Activated CD4-positive, alpha-beta T cell treated with anti-CD3 and anti-CD28 coated beads for 36 hours (primary cell): ENCODE measurements at regions of chr16 and their contacts with region 1.

Region 1: GRCh38 chr16:88785106-88785924 is at the start of gene PIEZO1:
- DNase-seq: peak; percentile 85
- ATAC-seq: peak; percentile 5
- H3K4me3 Mint-ChIP-seq: peak within 1 kb of the TSS; percentile 66
- H3K27ac Mint-ChIP-seq: peak within 1 kb of the TSS; percentile 78
- H3K4me1 Mint-ChIP-seq: peaks cover 44% of the 10 kb centered on the region
- H3K27me3 Mint-ChIP-seq: no peaks in the 10 kb centered on the region
- total RNA-seq, gene PIEZO1: 105 to 126 TPM

Region 2: DNA sequence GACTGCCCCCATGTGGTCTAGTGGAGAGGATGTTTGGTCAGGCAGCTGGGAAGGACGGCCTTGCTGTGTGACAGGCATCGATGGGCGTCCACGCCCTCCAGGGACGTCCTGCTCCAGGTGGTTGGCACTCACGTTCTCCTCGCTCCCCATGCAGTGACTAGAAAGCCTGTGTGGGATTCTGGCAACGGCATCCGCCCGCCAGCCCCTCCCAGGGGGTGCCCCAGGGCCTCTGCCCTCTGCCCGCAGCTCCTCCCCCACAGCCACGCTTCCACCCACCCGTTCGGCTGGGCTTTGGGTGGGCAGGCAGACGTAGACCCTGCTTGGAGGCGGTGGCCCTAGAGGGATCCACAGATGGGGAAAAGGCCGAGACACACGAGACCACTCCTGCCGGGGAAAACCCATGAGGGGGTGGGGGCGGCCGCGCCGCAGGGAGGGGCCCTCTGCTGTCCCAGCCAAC is 151.6 kb before region 1 on chr16:
- CTCF ChIA-PET with region 1: no interaction called
- POLR2A ChIA-PET with region 1: no interaction called
- intact Hi-C with region 1: loop called in 1 of 2 experiments (anchors 10 kb)
- DNase-seq: peak; percentile 81
- ATAC-seq: peak; percentile 53
- H3K4me3 Mint-ChIP-seq: peak overlapping the region; percentile 56
- H3K27ac Mint-ChIP-seq: no peak overlapping the region
- H3K4me1 Mint-ChIP-seq: peaks cover 38% of the 10 kb centered on the region
- H3K27me3 Mint-ChIP-seq: peaks cover 16% of the 10 kb centered on the region

Region 3: GRCh38 chr16:88686439-88687253 is 98.7 kb before region 1 on chr16 and contains the start of gene SNAI3:
- CTCF ChIA-PET with region 1: no interaction called
- POLR2A ChIA-PET with region 1: no interaction called
- intact Hi-C with region 1: loop called in 1 of 2 experiments (anchors 2 kb)
- DNase-seq: peak; percentile 91
- ATAC-seq: peak; percentile 69
- H3K4me3 Mint-ChIP-seq: peak within 1 kb of the TSS; percentile 70
- H3K27ac Mint-ChIP-seq: peak within 1 kb of the TSS; percentile 37
- H3K4me1 Mint-ChIP-seq: peaks cover 42% of the 10 kb centered on the region
- H3K27me3 Mint-ChIP-seq: no peaks in the 10 kb centered on the region
- total RNA-seq, gene SNAI3: 3.6 to 4.1 TPM

Region 4: DNA sequence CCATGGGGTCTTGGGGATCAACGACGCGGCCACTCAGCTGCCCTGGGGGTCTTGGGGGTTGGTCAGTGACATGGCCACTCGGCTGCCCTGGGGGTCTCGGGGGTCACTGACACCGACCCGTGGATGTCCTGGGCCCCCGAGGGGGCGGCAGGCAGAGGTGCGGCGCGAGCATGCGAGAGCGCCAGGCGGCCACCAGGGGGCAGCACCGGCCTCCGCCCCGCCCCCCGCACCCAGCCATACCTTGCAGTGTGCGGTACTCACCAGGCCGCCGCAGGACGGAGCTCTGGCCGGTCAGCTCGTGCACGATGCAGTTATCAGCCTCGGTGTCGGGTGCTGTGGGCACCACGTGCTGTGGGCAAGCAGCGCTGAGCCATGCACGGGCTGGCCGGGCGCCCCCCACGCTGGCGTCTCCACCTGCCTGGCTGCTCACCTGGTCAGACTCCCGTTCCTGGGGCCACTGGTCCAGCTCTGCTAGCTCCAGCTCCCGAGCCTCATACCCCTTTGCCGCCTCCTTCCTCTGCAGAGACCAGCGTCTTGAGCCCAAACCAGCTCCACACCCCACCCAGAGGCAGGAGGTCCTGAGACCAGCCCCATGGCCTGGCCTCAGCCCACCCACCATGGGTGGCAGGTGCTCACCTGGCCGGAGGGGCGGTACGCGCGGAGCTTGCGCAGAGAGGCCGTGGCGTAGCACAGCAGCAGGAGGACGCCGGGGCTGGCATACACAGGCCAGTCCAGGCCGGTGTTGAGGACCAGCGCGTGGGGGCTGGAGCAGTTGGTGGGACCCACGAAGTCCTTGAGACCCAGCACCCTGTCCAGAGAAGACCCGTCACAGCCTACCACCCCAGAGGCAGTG is 47.8 kb before region 1 on chr16:
- CTCF ChIA-PET with region 1: interaction called, 59 read pairs
- POLR2A ChIA-PET with region 1: no interaction called
- intact Hi-C with region 1: loop called (anchors 1 to 2 kb)
- DNase-seq: peak; percentile 89
- ATAC-seq: peak; percentile 91
- H3K4me3 Mint-ChIP-seq: no peak overlapping the region
- H3K27ac Mint-ChIP-seq: no peak overlapping the region
- H3K4me1 Mint-ChIP-seq: no peaks in the 10 kb centered on the region
- H3K27me3 Mint-ChIP-seq: no peaks in the 10 kb centered on the region

Region 5: GRCh38 chr16:88803264-88803987 is 18.1 kb after region 1 on chr16 and contains the start of gene CDT1:
- CTCF ChIA-PET with region 1: interaction called, 5 read pairs
- POLR2A ChIA-PET with region 1: interaction called, 8 read pairs
- intact Hi-C with region 1: loop called (anchors 1 to 2 kb)
- DNase-seq: peak; percentile 90
- ATAC-seq: peak; percentile 32
- H3K4me3 Mint-ChIP-seq: peak within 1 kb of the TSS; percentile 83
- H3K27ac Mint-ChIP-seq: peak within 1 kb of the TSS; percentile 94
- H3K4me1 Mint-ChIP-seq: peaks cover 24% of the 10 kb centered on the region
- H3K27me3 Mint-ChIP-seq: no peaks in the 10 kb centered on the region
- total RNA-seq, gene CDT1: 136 to 182 TPM